Naive thymus-derived CD4-positive, alpha-beta T cell (primary cell): ENCODE measurements at regions of chr21 and their contacts with region 1.

Region 1: DNA sequence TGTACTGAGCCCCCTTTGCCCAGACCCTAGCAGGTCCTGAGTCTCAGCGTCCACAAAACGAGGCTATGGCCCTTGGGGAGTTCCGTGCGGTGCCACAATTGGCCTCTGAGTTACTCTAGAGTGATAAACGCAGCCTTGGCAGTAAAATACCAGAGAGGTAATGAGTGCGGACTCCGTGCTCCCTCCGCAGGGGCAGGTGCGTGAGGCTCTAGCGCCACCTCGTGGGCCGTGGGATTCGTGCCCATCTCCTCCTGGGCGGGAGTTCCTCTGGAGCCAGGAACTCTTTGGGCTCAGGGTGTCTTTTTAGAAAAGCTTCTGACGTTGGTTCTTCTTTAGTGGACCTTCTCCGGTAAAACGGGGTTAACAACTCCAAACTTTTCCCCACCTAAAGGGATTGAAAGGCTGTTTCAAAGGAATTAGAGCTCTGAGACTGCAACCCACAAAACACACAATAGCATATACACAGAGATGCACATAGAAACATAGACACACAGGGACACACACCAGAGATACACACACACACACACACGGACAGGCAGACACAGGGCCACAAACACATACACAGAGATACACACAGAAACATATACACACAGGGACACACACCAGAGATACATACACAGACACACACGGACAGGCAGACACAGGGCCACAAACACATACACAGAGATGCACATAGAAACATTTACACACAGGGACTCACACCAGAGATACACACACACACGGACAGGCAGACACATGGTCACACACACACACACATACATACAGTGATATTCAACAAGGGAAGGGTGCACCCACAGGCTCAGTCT is 99.4 kb downstream of the KCNJ15 start:
- DNase-seq: peak; percentile 40 to 83 (median 72)
- ATAC-seq: peak; percentile 84
- H3K4me3 ChIP-seq: no peak overlapping the region
- H3K4me3 Mint-ChIP-seq: no peak overlapping the region
- H3K27ac ChIP-seq: no peak overlapping the region
- H3K27ac Mint-ChIP-seq: no peak overlapping the region
- H3K4me1 ChIP-seq: peaks cover 0 to 8% of the 10 kb centered on the region in 2 donors
- H3K4me1 Mint-ChIP-seq: peaks cover 5 to 15% (median 10%) of the 10 kb centered on the region in 7 donors
- H3K27me3 ChIP-seq: no peaks in the 10 kb centered on the region
- H3K27me3 Mint-ChIP-seq: peaks cover 4 to 25% (median 12%) of the 10 kb centered on the region in 5 donors

Region 2: DNA sequence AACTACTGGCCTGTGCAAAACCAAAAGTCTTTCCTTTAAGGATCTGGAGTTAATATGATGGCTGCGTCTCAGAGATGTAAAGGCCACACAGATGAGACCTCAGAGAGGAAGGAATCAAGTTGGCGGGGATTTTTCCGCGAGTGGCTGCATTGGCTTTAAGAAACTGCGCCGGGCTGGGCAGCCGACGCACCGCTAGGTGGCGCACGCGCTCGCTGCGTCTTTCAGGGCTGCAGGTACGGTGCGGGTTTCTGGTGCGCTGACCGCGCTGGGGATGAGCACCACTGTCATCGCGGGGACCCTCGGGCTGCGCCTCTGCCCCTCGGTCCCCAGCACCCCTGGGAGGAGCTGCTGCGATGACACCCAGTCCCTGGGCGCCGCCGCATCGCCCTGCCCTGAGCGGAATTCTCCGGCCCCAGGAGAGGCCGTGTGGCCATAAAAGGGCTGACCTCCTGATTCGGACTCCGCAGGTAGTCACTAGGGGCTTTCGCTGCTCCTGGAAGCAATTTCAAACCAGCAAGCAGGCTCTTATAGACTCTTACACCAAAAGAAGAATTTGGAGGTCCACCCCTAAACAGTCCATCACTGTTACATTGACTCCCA is 680.9 kb before region 1 on chr21:
- CTCF ChIA-PET with region 1: interaction called, 4 read pairs
- POLR2A ChIA-PET with region 1: no interaction called
- intact Hi-C with region 1: loop called in 1 of 2 experiments (anchors 10 kb)
- DNase-seq: peak; percentile 20 to 66 (median 38)
- ATAC-seq: peak; percentile 67
- H3K4me3 ChIP-seq: no peak overlapping the region
- H3K4me3 Mint-ChIP-seq: no peak overlapping the region
- H3K27ac ChIP-seq: no peak overlapping the region
- H3K27ac Mint-ChIP-seq: peak overlapping the region in 1 of 9 donors; percentile 70
- H3K4me1 ChIP-seq: no peaks in the 10 kb centered on the region
- H3K4me1 Mint-ChIP-seq: peaks cover 0 to 2% (median 0%) of the 10 kb centered on the region in 7 donors
- H3K27me3 ChIP-seq: no peaks in the 10 kb centered on the region
- H3K27me3 Mint-ChIP-seq: peaks cover 18 to 50% (median 29%) of the 10 kb centered on the region in 5 donors

Region 3: DNA sequence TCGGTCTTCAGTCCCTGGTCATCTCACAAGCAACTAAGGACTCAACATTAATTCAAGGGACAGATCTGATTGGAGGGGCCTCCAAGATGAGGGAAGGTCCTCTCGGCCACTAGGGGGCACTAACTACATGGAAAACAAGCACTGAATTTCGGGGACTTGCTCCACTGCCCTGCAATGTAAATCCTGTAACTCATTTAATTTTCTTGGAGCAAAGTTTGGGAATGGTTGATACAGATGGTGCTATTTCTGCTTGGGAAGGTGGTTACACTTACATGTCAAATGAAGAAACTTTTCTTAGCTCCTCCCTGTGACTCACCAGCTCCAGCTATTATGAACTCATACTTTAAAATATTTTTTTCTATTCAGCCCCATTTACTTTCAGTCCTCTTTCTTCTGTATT is 196.8 kb before region 1 on chr21:
- CTCF ChIA-PET with region 1: interaction called, 30 read pairs
- POLR2A ChIA-PET with region 1: no interaction called
- intact Hi-C with region 1: loop called (anchors 1 kb)
- DNase-seq: peak; percentile 23 to 68 (median 54)
- ATAC-seq: peak; percentile 54
- H3K4me3 ChIP-seq: no peak overlapping the region
- H3K4me3 Mint-ChIP-seq: no peak overlapping the region
- H3K27ac ChIP-seq: no peak overlapping the region
- H3K27ac Mint-ChIP-seq: no peak overlapping the region
- H3K4me1 ChIP-seq: no peaks in the 10 kb centered on the region
- H3K4me1 Mint-ChIP-seq: no peaks in the 10 kb centered on the region
- H3K27me3 ChIP-seq: no peaks in the 10 kb centered on the region
- H3K27me3 Mint-ChIP-seq: peaks cover 19 to 32% (median 20%) of the 10 kb centered on the region in 5 donors

Region 4: GRCh38 chr21:38219049-38219628 is 137.1 kb before region 1 on chr21:
- CTCF ChIA-PET with region 1: interaction called, 85 read pairs
- POLR2A ChIA-PET with region 1: no interaction called
- intact Hi-C with region 1: loop called (anchors 1 kb)
- DNase-seq: peak; percentile 22 to 74 (median 53)
- ATAC-seq: peak; percentile 89
- H3K4me3 ChIP-seq: no peak overlapping the region
- H3K4me3 Mint-ChIP-seq: no peak overlapping the region
- H3K27ac ChIP-seq: no peak overlapping the region
- H3K27ac Mint-ChIP-seq: peak overlapping the region in 5 of 9 donors; percentile 2 to 68 (median 30)
- H3K4me1 ChIP-seq: no peaks in the 10 kb centered on the region
- H3K4me1 Mint-ChIP-seq: peaks cover 0 to 6% (median 4%) of the 10 kb centered on the region in 7 donors
- H3K27me3 ChIP-seq: no peaks in the 10 kb centered on the region
- H3K27me3 Mint-ChIP-seq: no peaks in the 10 kb centered on the region

Region 5: GRCh38 chr21:38297194-38297631 is 59.0 kb before region 1 on chr21:
- CTCF ChIA-PET with region 1: interaction called, 3 read pairs
- POLR2A ChIA-PET with region 1: no interaction called
- intact Hi-C with region 1: loop called in 1 of 2 experiments (anchors 1 kb)
- DNase-seq: no peak
- ATAC-seq: peak; percentile 57
- H3K4me3 ChIP-seq: no peak overlapping the region
- H3K4me3 Mint-ChIP-seq: peak overlapping the region in 8 of 10 donors; percentile 5 to 85 (median 65)
- H3K27ac ChIP-seq: peak overlapping the region; percentile 19
- H3K27ac Mint-ChIP-seq: peak overlapping the region in 8 of 9 donors; percentile 79 to 94 (median 88)
- H3K4me1 ChIP-seq: peaks cover 0 to 59% of the 10 kb centered on the region in 2 donors
- H3K4me1 Mint-ChIP-seq: peaks cover 23 to 91% (median 51%) of the 10 kb centered on the region in 7 donors
- H3K27me3 ChIP-seq: no peaks in the 10 kb centered on the region
- H3K27me3 Mint-ChIP-seq: peaks cover 0 to 3% (median 0%) of the 10 kb centered on the region in 5 donors

Region 6: GRCh38 chr21:38470762-38471161 is 114.6 kb after region 1 on chr21:
- CTCF ChIA-PET with region 1: no interaction called
- POLR2A ChIA-PET with region 1: no interaction called
- intact Hi-C with region 1: no loop called
- DNase-seq: no peak
- ATAC-seq: no peak
- H3K4me3 ChIP-seq: no peak overlapping the region
- H3K4me3 Mint-ChIP-seq: no peak overlapping the region
- H3K27ac ChIP-seq: no peak overlapping the region
- H3K27ac Mint-ChIP-seq: no peak overlapping the region
- H3K4me1 ChIP-seq: no peaks in the 10 kb centered on the region
- H3K4me1 Mint-ChIP-seq: peaks cover 0 to 5% (median 0%) of the 10 kb centered on the region in 7 donors
- H3K27me3 ChIP-seq: peaks cover 0 to 6% of the 10 kb centered on the region in 2 donors
- H3K27me3 Mint-ChIP-seq: peaks cover 36 to 64% (median 62%) of the 10 kb centered on the region in 5 donors